Right lobe of liver (tissue), 6 donors: ENCODE measurements at regions of chr10 and their contacts with region 1.

Region 1: DNA sequence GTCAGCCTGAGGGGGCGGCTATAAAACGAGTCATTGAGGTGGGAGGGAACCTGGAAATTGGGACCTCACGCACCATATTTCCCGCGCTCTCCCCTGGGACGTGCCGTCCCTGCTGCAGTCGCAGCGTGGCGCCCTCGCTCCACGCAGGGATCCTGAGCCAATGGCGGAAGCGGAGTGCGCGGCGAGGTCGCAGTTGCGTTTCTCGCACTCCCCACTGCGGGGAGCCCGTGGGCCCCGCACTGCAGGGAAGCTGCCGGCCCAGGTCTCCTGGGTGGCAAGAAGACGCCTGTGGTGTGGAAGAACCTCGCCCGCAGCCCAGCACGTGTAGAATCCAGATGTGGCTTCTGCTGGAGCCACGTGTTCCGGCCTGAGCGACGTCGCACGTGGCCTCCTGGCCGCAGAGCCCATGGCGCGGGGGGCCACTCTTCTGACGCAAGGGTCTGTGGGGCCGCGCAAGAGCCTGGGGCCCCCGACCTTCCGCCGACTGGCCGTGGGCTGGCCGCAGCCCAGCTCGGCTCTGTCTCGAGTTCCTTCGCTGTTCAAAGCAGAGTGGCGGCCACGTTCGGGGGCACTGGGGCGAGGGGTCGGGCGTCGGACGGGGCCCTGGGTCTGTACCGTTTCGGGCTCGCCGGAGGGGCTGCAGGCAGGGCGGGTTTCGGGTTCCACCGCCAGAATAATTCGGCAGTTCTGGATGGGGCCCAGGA is 26.4 kb downstream of the HIF1AN start:
- DNase-seq: peak; percentile 62 to 80 (median 67)
- ATAC-seq: peak; percentile 93 to 98 (median 95)
- H3K4me3 ChIP-seq: no peak overlapping the region
- H3K27ac ChIP-seq: no peak overlapping the region
- H3K4me1 ChIP-seq: peaks cover 0 to 6% (median 0%) of the 10 kb centered on the region in 4 donors
- H3K27me3 ChIP-seq: no peaks in the 10 kb centered on the region
- CTCF ChIP-seq: peak; percentile 75 to 93 (median 77)
- POLR2A ChIP-seq: no peak

Region 2: GRCh38 chr10:100481462-100482081 is 80.6 kb before region 1 on chr10:
- intact Hi-C with region 1: no loop called
- DNase-seq: peak; percentile 70 to 88 (median 84)
- ATAC-seq: peak; percentile 94 to 97 (median 94)
- H3K4me3 ChIP-seq: peak overlapping the region; percentile 36 to 48 (median 48)
- H3K27ac ChIP-seq: no peak overlapping the region
- H3K4me1 ChIP-seq: peaks cover 0 to 15% (median 5%) of the 10 kb centered on the region in 4 donors
- H3K27me3 ChIP-seq: no peaks in the 10 kb centered on the region
- CTCF ChIP-seq: no peak
- POLR2A ChIP-seq: no peak

Region 3: GRCh38 chr10:100743626-100744135 is 181.5 kb after region 1 on chr10:
- intact Hi-C with region 1: loop called (anchors 5 to 10 kb)
- DNase-seq: peak in 2 of 3 donors; percentile 65 to 66
- ATAC-seq: peak; percentile 83 to 91 (median 86)
- H3K4me3 ChIP-seq: no peak overlapping the region
- H3K27ac ChIP-seq: no peak overlapping the region
- H3K4me1 ChIP-seq: peaks cover 0 to 20% (median 6%) of the 10 kb centered on the region in 4 donors
- H3K27me3 ChIP-seq: peaks cover 14 to 53% of the 10 kb centered on the region in 2 donors
- CTCF ChIP-seq: peak; percentile 52 to 75 (median 70)
- POLR2A ChIP-seq: no peak

Region 4: GRCh38 chr10:100864978-100865377 is 302.8 kb after region 1 on chr10:
- intact Hi-C with region 1: loop called (anchors 10 kb)
- DNase-seq: no peak
- ATAC-seq: peak in 2 of 4 donors; percentile 35 to 68
- H3K4me3 ChIP-seq: no peak overlapping the region
- H3K27ac ChIP-seq: no peak overlapping the region
- H3K4me1 ChIP-seq: no peaks in the 10 kb centered on the region
- H3K27me3 ChIP-seq: no peaks in the 10 kb centered on the region
- CTCF ChIP-seq: no peak
- POLR2A ChIP-seq: no peak

Region 5: DNA sequence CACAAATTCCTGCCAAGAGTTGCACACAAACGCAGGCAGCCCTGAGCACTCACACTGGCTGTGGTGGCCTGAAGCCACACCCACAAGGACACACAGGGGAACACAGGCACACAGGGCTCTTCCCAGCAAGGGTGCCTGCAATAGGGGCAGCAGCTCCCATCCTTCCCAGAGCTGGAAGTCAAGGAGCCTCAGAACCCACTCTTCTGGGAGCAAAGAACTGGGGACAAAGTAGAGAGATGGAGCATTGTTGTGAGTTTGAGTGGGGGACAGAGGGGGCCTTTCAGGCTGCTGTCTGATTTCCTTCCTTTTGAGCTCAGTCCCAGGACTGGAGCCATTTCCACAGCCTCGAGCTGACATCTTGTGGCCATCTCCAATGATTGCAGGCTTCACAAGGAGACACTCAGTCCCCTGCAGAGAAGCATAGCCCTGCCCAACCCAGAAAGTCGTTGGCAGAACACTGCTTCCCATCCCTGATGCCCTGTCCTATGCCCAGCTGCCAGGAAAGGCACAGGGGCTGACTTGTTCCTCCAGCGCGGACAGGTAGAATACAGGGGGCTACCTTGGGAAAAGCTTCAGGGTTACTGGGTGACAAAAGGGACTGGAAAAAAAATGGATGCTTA is 316.2 kb after region 1 on chr10:
- intact Hi-C with region 1: loop called in 1 of 2 experiments (anchors 10 kb)
- DNase-seq: peak; percentile 34 to 66 (median 61)
- ATAC-seq: peak; percentile 87 to 94 (median 90)
- H3K4me3 ChIP-seq: no peak overlapping the region
- H3K27ac ChIP-seq: no peak overlapping the region
- H3K4me1 ChIP-seq: peaks cover 0 to 23% (median 6%) of the 10 kb centered on the region in 4 donors
- H3K27me3 ChIP-seq: no peaks in the 10 kb centered on the region
- CTCF ChIP-seq: peak; percentile 61 to 76 (median 70)
- POLR2A ChIP-seq: no peak